ENCODE measurements at regions of chr18 and their contacts with region 1.

Region 1: DNA sequence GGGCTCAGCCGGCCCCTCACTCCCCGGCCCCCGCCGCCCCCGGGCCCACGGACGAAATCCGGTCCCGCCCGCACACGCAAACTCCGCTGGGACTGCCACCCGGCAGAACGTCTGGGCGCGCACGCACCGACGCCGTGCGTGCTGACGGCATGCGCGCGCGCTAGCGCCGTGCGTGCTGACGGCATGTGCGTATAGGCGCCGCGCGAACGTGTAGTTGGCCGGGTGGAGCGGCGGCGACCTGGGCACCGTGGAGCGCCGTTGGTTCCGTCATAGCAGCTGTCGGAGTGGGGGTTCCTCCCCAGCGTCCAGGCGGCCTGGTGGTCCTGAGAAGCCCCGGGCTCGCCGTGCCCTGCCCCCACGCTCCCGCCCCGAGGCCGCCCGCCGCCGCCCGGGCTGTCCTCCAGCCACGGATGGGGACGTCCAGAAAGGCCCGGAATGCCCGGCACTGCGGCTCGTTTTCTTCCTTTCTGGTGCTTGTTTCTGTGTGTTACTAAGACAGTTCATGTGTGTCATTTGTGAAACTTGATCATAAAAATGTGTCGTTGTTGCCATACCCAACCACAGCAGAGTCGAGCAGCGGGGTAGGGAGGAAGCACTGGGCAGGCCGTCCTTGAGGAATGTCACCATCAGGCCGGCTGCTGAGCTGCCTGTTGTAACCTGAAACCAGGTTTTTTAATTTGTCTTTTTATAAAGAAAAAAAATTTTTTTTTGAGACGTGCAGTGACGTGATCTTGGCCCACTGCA is at the start of gene TXNL4A:
- DNase-seq: no peak
- H3K4me3 ChIP-seq: peak within 1 kb of the TSS; percentile 81 to 98 (median 91)
- H3K27ac ChIP-seq: peak within 1 kb of the TSS; percentile 94 to 99 (median 98)
- H3K4me1 ChIP-seq: peaks cover 19 to 47% (median 32%) of the 10 kb centered on the region in 4 donors
- H3K27me3 ChIP-seq: no peaks in the 10 kb centered on the region
- CTCF ChIP-seq: no peak
- EP300 ChIP-seq: no peak
- POLR2A ChIP-seq: peak; percentile 82
- total RNA-seq, gene TXNL4A: 21.6 to 44.9 (median 38.9) TPM

Region 2: GRCh38 chr18:79951578-79952455 is 36.8 kb before region 1 on chr18 and contains the start of gene SLC66A2:
- intact Hi-C with region 1: loop called (anchors 5 kb)
- DNase-seq: peak; percentile 97
- H3K4me3 ChIP-seq: peak within 1 kb of the TSS; percentile 78 to 99 (median 98)
- H3K27ac ChIP-seq: peak within 1 kb of the TSS; percentile 84 to 90 (median 89)
- H3K4me1 ChIP-seq: peaks cover 38 to 55% (median 45%) of the 10 kb centered on the region in 4 donors
- H3K27me3 ChIP-seq: no peaks in the 10 kb centered on the region
- CTCF ChIP-seq: peak in 1 of 3 experiments; percentile 8
- EP300 ChIP-seq: no peak
- POLR2A ChIP-seq: no peak
- total RNA-seq, gene SLC66A2: 27.0 to 46.4 (median 41.5) TPM

Region 3: GRCh38 chr18:80046011-80046410 is 57.4 kb after region 1 on chr18:
- intact Hi-C with region 1: no loop called
- DNase-seq: no peak
- H3K4me3 ChIP-seq: no peak overlapping the region
- H3K27ac ChIP-seq: no peak overlapping the region
- H3K4me1 ChIP-seq: no peaks in the 10 kb centered on the region
- H3K27me3 ChIP-seq: no peaks in the 10 kb centered on the region
- CTCF ChIP-seq: no peak
- EP300 ChIP-seq: no peak
- POLR2A ChIP-seq: no peak

Region 4: DNA sequence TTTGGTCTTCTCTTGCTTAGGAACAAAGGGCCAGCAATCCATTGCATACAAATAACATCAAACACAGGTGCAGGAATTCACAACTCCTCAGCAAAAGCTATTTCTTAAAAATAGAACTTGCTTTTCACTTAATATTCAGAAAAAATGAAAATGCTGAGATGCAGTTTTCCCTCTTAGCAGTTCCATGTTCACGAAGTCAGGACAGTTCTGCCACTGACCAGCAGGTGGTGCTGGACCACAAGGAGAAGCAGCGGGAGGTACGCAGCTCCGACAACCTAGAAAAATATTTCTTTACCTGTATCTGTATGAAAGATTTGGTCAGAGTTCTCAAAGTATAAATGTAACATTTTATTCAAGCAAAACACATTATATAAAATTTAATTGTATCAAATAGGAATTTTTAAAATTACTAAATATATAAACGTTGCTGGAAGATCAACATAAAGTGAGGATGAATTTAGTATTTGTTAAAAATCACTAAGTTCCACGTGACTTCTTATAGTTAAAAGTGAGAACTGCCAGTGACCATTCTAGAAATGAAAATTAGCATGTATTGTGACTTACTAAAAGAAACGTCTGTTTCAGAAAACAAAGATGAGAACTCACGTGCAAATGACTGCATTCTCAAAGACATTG is 169.2 kb after region 1 on chr18:
- intact Hi-C with region 1: no loop called
- DNase-seq: no peak
- H3K4me3 ChIP-seq: no peak overlapping the region
- H3K27ac ChIP-seq: no peak overlapping the region
- H3K4me1 ChIP-seq: peaks cover 0 to 17% (median 9%) of the 10 kb centered on the region in 4 donors
- H3K27me3 ChIP-seq: peaks cover 0 to 9% (median 0%) of the 10 kb centered on the region in 4 donors
- CTCF ChIP-seq: peak in 2 of 3 experiments; percentile 94 to 96
- EP300 ChIP-seq: no peak
- POLR2A ChIP-seq: no peak